ENCODE measurements at regions of chr3 and their contacts with region 1.

Region 1: GRCh38 chr3:15098503-15099363 is at the start of gene RBSN:
- DNase-seq: peak; percentile 94 to 97 (median 95)
- H3K4me3 ChIP-seq: peak within 1 kb of the TSS; percentile 95
- H3K4me3 Mint-ChIP-seq: peak within 1 kb of the TSS; percentile 91 to 97 (median 95)
- H3K27ac ChIP-seq: peak within 1 kb of the TSS; percentile 98
- H3K27ac Mint-ChIP-seq: peak within 1 kb of the TSS; percentile 91 to 100 (median 98)
- H3K4me1 ChIP-seq: peaks cover 18% of the 10 kb centered on the region
- H3K4me1 Mint-ChIP-seq: peaks cover 23 to 34% (median 30%) of the 10 kb centered on the region in 3 donors
- H3K27me3 ChIP-seq: no peaks in the 10 kb centered on the region
- H3K27me3 Mint-ChIP-seq: peaks cover 4 to 8% of the 10 kb centered on the region in 2 donors
- total RNA-seq, gene RBSN: 12.2 to 12.5 TPM

Region 2: GRCh38 chr3:14651440-14652251 is 447.1 kb before region 1 on chr3 and contains the start of gene CCDC174:
- CTCF ChIA-PET with region 1: no interaction called
- POLR2A ChIA-PET with region 1: interaction called, 13 read pairs
- DNase-seq: peak; percentile 87 to 97 (median 96)
- H3K4me3 ChIP-seq: peak within 1 kb of the TSS; percentile 82
- H3K4me3 Mint-ChIP-seq: peak within 1 kb of the TSS; percentile 80 to 98 (median 94)
- H3K27ac ChIP-seq: peak within 1 kb of the TSS; percentile 97
- H3K27ac Mint-ChIP-seq: peak within 1 kb of the TSS; percentile 64 to 100 (median 99)
- H3K4me1 ChIP-seq: peaks cover 33% of the 10 kb centered on the region
- H3K4me1 Mint-ChIP-seq: peaks cover 39 to 64% (median 52%) of the 10 kb centered on the region in 3 donors
- H3K27me3 ChIP-seq: no peaks in the 10 kb centered on the region
- H3K27me3 Mint-ChIP-seq: no peaks in the 10 kb centered on the region
- total RNA-seq, gene CCDC174: 16.8 to 18.2 TPM

Region 3: DNA sequence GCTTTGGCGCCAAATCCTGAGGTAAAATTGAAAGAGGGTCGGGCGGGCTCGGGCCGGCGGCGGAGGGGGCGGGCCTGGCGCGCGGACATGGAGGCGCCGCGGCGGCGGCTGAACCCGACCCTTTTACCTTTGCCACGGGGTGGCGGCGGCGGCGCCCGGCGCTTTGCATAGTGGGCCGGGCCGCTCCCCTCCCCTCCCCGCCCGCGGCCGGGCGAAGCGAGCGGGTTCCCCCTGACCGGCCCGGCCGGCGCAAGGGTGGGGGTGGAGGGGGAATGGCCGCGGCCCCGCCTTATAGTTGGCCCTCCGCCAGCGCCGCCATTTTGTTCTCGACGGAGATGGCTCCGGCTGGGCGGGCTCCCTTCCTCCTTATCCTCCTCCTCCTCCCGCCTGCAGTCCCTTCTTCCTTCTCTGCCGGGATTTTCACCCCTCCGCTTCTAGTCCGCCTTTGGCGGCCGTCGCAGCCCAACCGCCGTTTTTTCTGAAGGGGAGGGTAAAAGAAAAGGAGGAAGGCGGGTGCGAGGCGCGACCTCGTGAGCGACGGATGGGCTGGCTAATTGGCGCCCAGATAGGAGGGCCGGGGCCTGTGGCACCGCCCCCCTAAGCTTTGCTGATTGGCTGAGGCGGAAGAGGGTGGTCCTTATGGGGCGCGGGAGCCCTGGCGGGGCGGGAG is 150.7 kb before region 1 on chr3:
- CTCF ChIA-PET with region 1: no interaction called
- POLR2A ChIA-PET with region 1: interaction called, 10 read pairs
- DNase-seq: peak; percentile 94 to 97 (median 96)
- H3K4me3 ChIP-seq: peak overlapping the region; percentile 94
- H3K4me3 Mint-ChIP-seq: peak overlapping the region; percentile 98 to 100 (median 100)
- H3K27ac ChIP-seq: peak overlapping the region; percentile 94
- H3K27ac Mint-ChIP-seq: peak overlapping the region; percentile 93 to 100 (median 100)
- H3K4me1 ChIP-seq: peaks cover 33% of the 10 kb centered on the region
- H3K4me1 Mint-ChIP-seq: peaks cover 52 to 84% (median 59%) of the 10 kb centered on the region in 3 donors
- H3K27me3 ChIP-seq: no peaks in the 10 kb centered on the region
- H3K27me3 Mint-ChIP-seq: no peaks in the 10 kb centered on the region

Region 4: GRCh38 chr3:15064835-15065549 is 33.7 kb before region 1 on chr3 and contains the start of gene MRPS25:
- CTCF ChIA-PET with region 1: interaction called, 4 read pairs
- POLR2A ChIA-PET with region 1: interaction called, 19 read pairs
- DNase-seq: peak; percentile 83 to 93 (median 85)
- H3K4me3 ChIP-seq: peak within 1 kb of the TSS; percentile 65
- H3K4me3 Mint-ChIP-seq: peak within 1 kb of the TSS; percentile 93 to 99 (median 97)
- H3K27ac ChIP-seq: peak within 1 kb of the TSS; percentile 83
- H3K27ac Mint-ChIP-seq: peak within 1 kb of the TSS; percentile 85 to 98 (median 95)
- H3K4me1 ChIP-seq: peaks cover 16% of the 10 kb centered on the region
- H3K4me1 Mint-ChIP-seq: peaks cover 27 to 31% (median 31%) of the 10 kb centered on the region in 3 donors
- H3K27me3 ChIP-seq: no peaks in the 10 kb centered on the region
- H3K27me3 Mint-ChIP-seq: no peaks in the 10 kb centered on the region
- total RNA-seq, gene MRPS25: 82.7 to 84.7 TPM

Region 5: GRCh38 chr3:15171096-15171495 is 72.4 kb after region 1 on chr3:
- CTCF ChIA-PET with region 1: no interaction called
- POLR2A ChIA-PET with region 1: no interaction called
- DNase-seq: no peak
- H3K4me3 ChIP-seq: no peak overlapping the region
- H3K4me3 Mint-ChIP-seq: no peak overlapping the region
- H3K27ac ChIP-seq: no peak overlapping the region
- H3K27ac Mint-ChIP-seq: no peak overlapping the region
- H3K4me1 ChIP-seq: no peaks in the 10 kb centered on the region
- H3K4me1 Mint-ChIP-seq: peaks cover 0 to 4% (median 0%) of the 10 kb centered on the region in 3 donors
- H3K27me3 ChIP-seq: no peaks in the 10 kb centered on the region
- H3K27me3 Mint-ChIP-seq: peaks cover 5 to 41% of the 10 kb centered on the region in 2 donors

Measured in CD8-positive, alpha-beta memory T cell (primary cell).